Panc1 (cell line): ENCODE measurements at regions of chr17 and their contacts with region 1.

Region 1: GRCh38 chr17:14522795-14523387 is 222.0 kb downstream of the HS3ST3B1 start:
- DNase-seq: no peak
- ATAC-seq: no peak
- H3K4me3 ChIP-seq: no peak overlapping the region
- H3K27ac ChIP-seq: no peak overlapping the region
- H3K4me1 ChIP-seq: no peaks in the 10 kb centered on the region
- H3K27me3 ChIP-seq: no peaks in the 10 kb centered on the region
- CTCF ChIP-seq: no peak

Region 2: GRCh38 chr17:14510136-14510535 is 12.8 kb before region 1 on chr17:
- CTCF ChIA-PET with region 1: no interaction called
- POLR2A ChIA-PET with region 1: no interaction called
- in situ Hi-C with region 1: no loop called
- intact Hi-C with region 1: no loop called
- DNase-seq: no peak
- ATAC-seq: no peak
- H3K4me3 ChIP-seq: no peak overlapping the region
- H3K27ac ChIP-seq: no peak overlapping the region
- H3K4me1 ChIP-seq: no peaks in the 10 kb centered on the region
- H3K27me3 ChIP-seq: no peaks in the 10 kb centered on the region
- CTCF ChIP-seq: no peak

Region 3: DNA sequence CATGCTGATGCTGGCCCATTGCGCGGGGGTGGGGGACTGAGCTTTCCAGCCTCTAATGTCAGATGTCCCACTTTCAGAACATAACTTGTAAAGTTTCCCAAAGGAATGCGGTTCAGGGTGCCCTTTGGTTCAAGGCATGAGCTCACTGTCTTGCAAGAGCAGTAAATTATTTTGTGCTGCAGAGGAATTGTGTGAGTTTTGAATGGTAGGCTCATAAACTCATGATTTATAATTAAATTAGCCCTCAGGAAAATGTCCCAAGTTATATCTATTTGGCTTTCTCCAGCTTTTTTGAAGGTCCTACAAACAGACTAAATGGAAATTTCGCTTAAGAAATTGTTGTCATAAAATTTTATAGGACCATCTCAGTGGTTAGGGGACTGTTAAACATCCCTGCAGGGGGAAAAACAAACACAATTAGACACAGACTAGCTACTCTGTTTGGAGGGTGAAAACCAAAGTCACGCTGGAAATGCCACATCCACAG is 99.8 kb after region 1 on chr17:
- CTCF ChIA-PET with region 1: no interaction called
- POLR2A ChIA-PET with region 1: interaction called, 10 read pairs
- in situ Hi-C with region 1: no loop called
- intact Hi-C with region 1: no loop called
- DNase-seq: no peak
- ATAC-seq: no peak
- H3K4me3 ChIP-seq: no peak overlapping the region
- H3K27ac ChIP-seq: no peak overlapping the region
- H3K4me1 ChIP-seq: no peaks in the 10 kb centered on the region
- H3K27me3 ChIP-seq: no peaks in the 10 kb centered on the region
- CTCF ChIP-seq: no peak